ENCODE measurements at regions of chr20 and their contacts with region 1.

Region 1: GRCh38 chr20:32902456-32903420 is 44.0 kb downstream of the EFCAB8 start:
- DNase-seq: no peak
- H3K4me3 ChIP-seq: no peak overlapping the region
- H3K27ac ChIP-seq: no peak overlapping the region
- H3K4me1 ChIP-seq: peaks cover 0 to 3% (median 0%) of the 10 kb centered on the region in 3 donors
- H3K27me3 ChIP-seq: no peaks in the 10 kb centered on the region
- CTCF ChIP-seq: peak; percentile 87 to 94 (median 92)
- POLR2A ChIP-seq: no peak

Region 2: GRCh38 chr20:32456869-32457478 is 445.8 kb before region 1 on chr20:
- intact Hi-C with region 1: no loop called
- DNase-seq: no peak
- H3K4me3 ChIP-seq: peak overlapping the region in 3 of 4 donors; percentile 42 to 64 (median 43)
- H3K27ac ChIP-seq: no peak overlapping the region
- H3K4me1 ChIP-seq: peaks cover 10 to 21% (median 13%) of the 10 kb centered on the region in 3 donors
- H3K27me3 ChIP-seq: no peaks in the 10 kb centered on the region
- CTCF ChIP-seq: peak; percentile 54 to 73 (median 60)
- POLR2A ChIP-seq: no peak

Region 3: DNA sequence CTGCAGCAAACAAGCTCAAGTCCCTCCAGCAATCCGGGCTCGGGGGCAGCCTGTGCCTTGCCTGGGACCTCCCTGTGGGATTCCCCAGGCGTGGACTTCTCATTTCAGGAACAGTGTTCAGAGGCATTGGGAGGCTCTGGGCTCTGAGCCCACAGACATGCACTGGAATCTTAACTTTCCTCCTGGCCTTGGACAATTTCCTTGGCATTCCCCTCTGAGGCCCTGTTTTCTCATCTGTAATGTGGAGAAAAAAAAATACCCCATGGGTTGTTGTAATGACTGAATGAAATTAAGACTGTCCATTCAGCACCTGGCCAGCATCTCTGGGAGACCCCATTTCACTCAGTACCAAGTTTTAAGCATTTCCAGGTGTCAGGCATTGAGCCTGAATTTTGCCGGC is 194.3 kb after region 1 on chr20:
- intact Hi-C with region 1: loop called (anchors 10 kb)
- DNase-seq: no peak
- H3K4me3 ChIP-seq: no peak overlapping the region
- H3K27ac ChIP-seq: no peak overlapping the region
- H3K4me1 ChIP-seq: peaks cover 0 to 2% (median 0%) of the 10 kb centered on the region in 3 donors
- H3K27me3 ChIP-seq: peaks cover 0 to 22% (median 0%) of the 10 kb centered on the region in 4 donors
- CTCF ChIP-seq: no peak
- POLR2A ChIP-seq: no peak

Region 4: DNA sequence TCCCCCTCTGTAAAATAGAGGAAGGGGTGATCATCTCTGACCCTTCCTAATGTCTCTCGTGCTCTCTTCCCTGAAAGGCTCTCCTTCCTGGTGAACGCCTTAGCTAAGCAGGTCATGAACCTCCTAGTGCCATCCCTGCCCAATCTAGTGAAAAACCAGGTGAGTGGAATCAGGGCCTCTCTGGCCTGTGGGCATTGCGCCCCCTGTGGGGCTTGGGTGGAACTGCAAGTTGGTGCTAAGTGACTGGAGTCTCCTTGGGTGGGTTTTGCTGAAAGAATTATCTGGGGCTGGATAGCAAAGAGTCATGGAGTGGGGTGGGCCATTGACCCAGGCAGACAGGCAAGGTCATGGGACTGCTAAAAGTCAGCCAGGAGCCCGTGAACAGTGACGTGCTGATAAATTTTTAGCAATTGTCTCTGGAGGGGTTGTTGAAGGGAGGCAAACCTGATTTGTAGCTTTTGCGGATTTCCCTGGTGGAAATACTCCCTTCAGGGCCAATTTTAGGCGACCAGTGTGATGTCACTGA is 389.2 kb after region 1 on chr20:
- intact Hi-C with region 1: loop called (anchors 5 kb)
- DNase-seq: no peak
- H3K4me3 ChIP-seq: no peak overlapping the region
- H3K27ac ChIP-seq: no peak overlapping the region
- H3K4me1 ChIP-seq: no peaks in the 10 kb centered on the region
- H3K27me3 ChIP-seq: peaks cover 0 to 63% (median 0%) of the 10 kb centered on the region in 4 donors
- CTCF ChIP-seq: peak; percentile 63 to 84 (median 80)
- POLR2A ChIP-seq: no peak

Measured in esophagus squamous epithelium (tissue), 5 donors.